ENCODE measurements at regions of chr17 and their contacts with region 1.

Region 1: GRCh38 chr17:75749545-75750389 is 15.2 kb downstream of the GALK1 start:
- DNase-seq: peak in 1 of 2 experiments; percentile 64
- H3K4me3 ChIP-seq: no peak overlapping the region
- H3K27ac ChIP-seq: no peak overlapping the region
- H3K4me1 ChIP-seq: 0 out of 2 replicates have a peak, but pooled peaks cover 3% of the 10 kb centered on the region
- H3K27me3 ChIP-seq: no peaks in the 10 kb centered on the region
- CTCF ChIP-seq: peak; percentile 92

Region 2: GRCh38 chr17:75393523-75394331 is 356.0 kb before region 1 on chr17:
- CTCF ChIA-PET with region 1: interaction called, 18 read pairs
- POLR2A ChIA-PET with region 1: no interaction called
- intact Hi-C with region 1: no loop called
- DNase-seq: peak; percentile 95 to 97
- H3K4me3 ChIP-seq: peak overlapping the region; percentile 69
- H3K27ac ChIP-seq: peak overlapping the region; percentile 31
- H3K4me1 ChIP-seq: peaks cover 27% of the 10 kb centered on the region
- H3K27me3 ChIP-seq: no peaks in the 10 kb centered on the region
- CTCF ChIP-seq: no peak

Region 3: DNA sequence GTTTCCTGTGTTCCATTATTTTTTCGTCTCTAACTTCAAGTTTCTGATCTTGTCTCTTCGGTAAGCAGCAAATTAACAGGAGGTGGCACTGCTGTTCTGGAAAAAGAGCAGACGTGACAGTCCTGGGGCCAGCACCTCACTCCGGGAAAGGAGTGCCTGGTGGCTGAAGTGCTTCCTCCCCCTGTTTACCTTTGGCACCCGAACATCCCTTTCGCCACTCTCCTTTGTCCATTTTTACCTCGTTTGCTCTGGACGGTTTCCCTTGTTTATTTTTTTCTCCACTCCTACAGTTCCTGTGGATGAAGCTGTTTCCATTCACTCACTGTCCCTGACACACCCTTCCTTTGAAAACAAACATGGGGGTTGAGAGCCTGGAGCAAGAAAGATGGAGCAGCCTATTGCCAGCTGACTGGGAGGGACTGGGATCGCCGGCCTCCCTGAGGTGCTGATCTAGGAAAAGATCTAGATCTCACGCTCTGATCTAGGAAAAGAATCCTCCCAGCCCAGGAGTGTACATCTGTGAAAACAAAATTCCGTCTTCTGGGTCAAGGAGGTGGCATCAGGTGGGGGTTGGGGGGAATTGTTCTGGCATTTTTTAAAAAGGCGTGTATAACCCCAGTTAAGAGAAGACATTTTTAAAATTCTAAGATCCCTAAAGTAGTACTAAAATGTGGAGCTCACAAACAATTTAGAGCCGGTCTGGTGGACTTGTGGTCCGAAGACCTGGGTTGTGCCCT is 69.9 kb before region 1 on chr17:
- CTCF ChIA-PET with region 1: interaction called, 11 read pairs
- POLR2A ChIA-PET with region 1: interaction called, 6 read pairs
- intact Hi-C with region 1: loop called (anchors 1 kb)
- DNase-seq: peak; percentile 70 to 77
- H3K4me3 ChIP-seq: no peak overlapping the region
- H3K27ac ChIP-seq: peak overlapping the region; percentile 51
- H3K4me1 ChIP-seq: peaks cover 59% of the 10 kb centered on the region
- H3K27me3 ChIP-seq: no peaks in the 10 kb centered on the region
- CTCF ChIP-seq: peak; percentile 58